MCF 10A (cell line): ENCODE measurements at regions of chr4 and their contacts with region 1.

Region 1: DNA sequence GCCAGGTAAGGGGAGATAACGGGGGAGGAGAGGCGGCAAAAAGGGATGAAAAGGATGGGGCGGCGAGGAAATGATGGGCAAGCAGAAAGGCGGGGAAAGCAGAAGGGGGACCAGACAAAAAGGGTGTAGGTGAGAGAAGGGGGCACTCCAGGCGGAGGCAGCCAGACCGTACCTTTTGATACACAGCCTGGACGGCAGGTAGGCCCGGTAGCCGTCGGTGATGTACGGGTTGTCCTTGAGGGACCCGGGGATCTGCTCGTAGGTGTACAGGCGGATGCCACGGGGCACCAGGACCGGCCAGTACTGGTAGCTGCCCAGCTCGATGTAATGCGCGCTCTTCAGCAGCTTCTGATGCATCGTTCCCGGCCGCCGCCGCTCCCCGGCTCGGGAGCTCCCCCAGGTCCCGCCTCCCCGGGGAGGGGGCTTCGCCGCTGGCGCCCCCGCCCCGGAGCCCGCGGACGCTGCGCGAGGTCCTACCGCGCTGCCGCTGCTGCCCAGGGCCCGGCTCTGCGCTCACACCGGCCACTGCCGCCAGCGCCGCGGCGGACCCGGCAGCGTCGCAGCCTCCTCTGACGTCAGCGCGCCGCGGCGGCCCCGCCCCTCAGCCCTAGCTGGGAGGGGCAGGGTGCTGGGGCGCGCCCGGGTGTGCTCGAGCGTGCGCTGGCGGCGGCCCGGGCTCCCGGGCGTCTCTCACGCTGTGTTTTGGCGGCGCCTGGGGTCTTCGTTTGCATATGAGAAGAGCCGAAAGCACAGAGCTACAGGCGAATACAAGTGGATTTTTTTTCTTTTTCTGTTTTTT is at the start of gene PAQR3:
- DNase-seq: peak; percentile 80
- H3K4me3 Mint-ChIP-seq: peak within 1 kb of the TSS; percentile 93
- H3K27ac Mint-ChIP-seq: peak within 1 kb of the TSS; percentile 93
- H3K4me1 Mint-ChIP-seq: peaks cover 5% of the 10 kb centered on the region
- H3K27me3 Mint-ChIP-seq: no peaks in the 10 kb centered on the region
- CTCF ChIP-seq: no peak
- total RNA-seq, gene PAQR3: 11.2 and 19.1 TPM in 2 replicates

Region 2: DNA sequence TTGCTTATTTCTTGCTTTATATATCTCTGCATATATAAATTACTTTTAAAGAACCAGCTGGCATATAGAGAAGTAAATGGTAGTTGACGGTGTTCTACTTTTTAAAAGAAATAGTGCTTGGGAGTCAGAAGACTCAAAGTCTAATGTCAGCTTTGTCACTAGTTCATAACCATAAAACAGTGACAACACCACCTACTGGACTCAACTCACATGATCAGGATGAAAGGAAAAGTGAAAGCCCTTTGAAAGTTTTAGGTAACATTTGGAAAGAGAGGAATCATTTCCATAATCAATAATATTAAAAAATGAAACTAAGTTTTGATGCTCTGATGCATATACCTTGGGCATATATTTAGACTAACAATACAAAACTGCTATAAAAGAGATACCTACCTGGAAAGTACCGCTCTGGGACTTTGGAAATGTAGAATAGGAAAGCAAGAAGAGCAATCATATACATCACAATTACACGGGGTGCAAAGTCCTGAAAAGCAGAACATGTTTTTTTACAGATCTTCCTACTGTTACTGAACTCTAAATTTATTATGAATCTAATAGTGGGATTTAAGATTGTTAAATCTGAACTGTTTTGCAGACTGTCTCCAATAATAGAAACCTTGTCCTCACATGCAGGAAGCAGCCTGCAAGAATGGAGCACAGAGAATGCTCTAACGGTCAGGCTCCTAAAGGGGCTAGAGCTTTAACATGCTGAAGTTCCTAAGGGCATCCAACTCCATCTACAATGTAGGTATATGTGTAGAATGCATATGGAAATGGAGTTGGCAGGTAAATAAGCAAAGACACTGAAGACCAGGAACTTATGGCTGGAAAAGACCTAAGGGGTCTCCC is 15.4 kb before region 1 on chr4:
- CTCF ChIA-PET with region 1: interaction called, 8 read pairs
- POLR2A ChIA-PET with region 1: interaction called, 12 read pairs
- intact Hi-C with region 1: no loop called
- DNase-seq: no peak
- H3K4me3 Mint-ChIP-seq: no peak overlapping the region
- H3K27ac Mint-ChIP-seq: peak overlapping the region; percentile 31
- H3K4me1 Mint-ChIP-seq: no peaks in the 10 kb centered on the region
- H3K27me3 Mint-ChIP-seq: no peaks in the 10 kb centered on the region
- CTCF ChIP-seq: no peak

Region 3: GRCh38 chr4:79413032-79413885 is 474.2 kb after region 1 on chr4:
- CTCF ChIA-PET with region 1: no interaction called
- POLR2A ChIA-PET with region 1: no interaction called
- intact Hi-C with region 1: no loop called
- DNase-seq: no peak
- H3K4me3 Mint-ChIP-seq: no peak overlapping the region
- H3K27ac Mint-ChIP-seq: no peak overlapping the region
- H3K4me1 Mint-ChIP-seq: no peaks in the 10 kb centered on the region
- H3K27me3 Mint-ChIP-seq: peaks cover 12% of the 10 kb centered on the region
- CTCF ChIP-seq: no peak